Tibial artery (tissue), 4 donors: ENCODE measurements at regions of chr20 and their contacts with region 1.

Region 1: DNA sequence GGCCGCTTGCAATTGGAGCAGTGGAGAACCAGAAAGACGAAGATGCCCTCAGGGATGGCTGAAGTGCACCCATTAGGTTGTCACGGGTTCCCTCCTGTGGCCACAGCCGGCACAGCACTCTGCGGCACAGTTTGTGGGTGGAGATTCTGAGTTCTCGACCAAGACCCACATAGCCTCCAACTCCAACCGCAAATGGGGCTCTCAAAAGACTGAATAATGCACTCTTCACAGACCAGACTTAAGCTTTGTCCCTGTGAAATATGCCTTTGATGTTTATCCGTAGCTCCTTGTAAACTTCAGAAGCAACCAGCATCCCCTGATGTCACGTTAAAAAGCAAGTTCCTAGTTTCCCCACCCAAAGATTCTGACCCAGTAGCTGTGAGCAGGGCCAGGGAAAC is 934 bp upstream of the CST9 start:
- DNase-seq: peak; percentile 85 to 88
- H3K4me3 ChIP-seq: no peak overlapping the region
- H3K27ac ChIP-seq: no peak overlapping the region
- H3K4me1 ChIP-seq: peaks cover 0 to 7% (median 0%) of the 10 kb centered on the region in 4 donors
- H3K27me3 ChIP-seq: peaks cover 0 to 8% of the 10 kb centered on the region in 2 donors
- CTCF ChIP-seq: peak; percentile 89 to 91

Region 2: DNA sequence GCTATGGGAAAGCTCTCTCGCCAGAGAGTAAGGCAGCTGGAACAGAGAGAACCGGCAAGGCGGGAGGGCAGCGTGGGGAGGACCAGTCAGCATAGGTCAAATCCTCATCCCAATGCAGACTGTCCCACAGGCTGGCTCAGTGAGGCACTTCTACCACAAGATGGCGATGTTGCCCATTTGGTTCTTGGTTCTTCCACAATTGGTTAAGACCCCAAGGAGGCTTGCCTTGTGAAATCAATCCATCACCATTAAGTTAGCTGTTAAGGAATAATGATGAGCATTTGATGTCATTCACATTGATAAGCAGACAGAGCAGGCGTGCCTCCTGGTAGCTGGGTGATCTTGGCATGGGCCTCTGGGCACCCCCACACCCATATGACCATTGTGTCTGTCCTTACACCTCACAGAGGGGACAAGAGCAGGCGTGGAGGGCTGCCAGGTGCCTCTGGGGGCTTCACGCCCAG is 164.8 kb before region 1 on chr20:
- intact Hi-C with region 1: loop called (anchors 10 kb)
- DNase-seq: peak; percentile 72 to 74
- H3K4me3 ChIP-seq: no peak overlapping the region
- H3K27ac ChIP-seq: no peak overlapping the region
- H3K4me1 ChIP-seq: no peaks in the 10 kb centered on the region
- H3K27me3 ChIP-seq: peaks cover 0 to 2% of the 10 kb centered on the region in 2 donors
- CTCF ChIP-seq: peak; percentile 67 to 85

Region 3: GRCh38 chr20:23759306-23759940 is 152.8 kb after region 1 on chr20:
- intact Hi-C with region 1: no loop called
- DNase-seq: no peak
- H3K4me3 ChIP-seq: no peak overlapping the region
- H3K27ac ChIP-seq: no peak overlapping the region
- H3K4me1 ChIP-seq: no peaks in the 10 kb centered on the region
- H3K27me3 ChIP-seq: no peaks in the 10 kb centered on the region
- CTCF ChIP-seq: no peak